Motor neuron (in vitro differentiated cells): ENCODE measurements at regions of chr18 and their contacts with region 1.

Region 1: DNA sequence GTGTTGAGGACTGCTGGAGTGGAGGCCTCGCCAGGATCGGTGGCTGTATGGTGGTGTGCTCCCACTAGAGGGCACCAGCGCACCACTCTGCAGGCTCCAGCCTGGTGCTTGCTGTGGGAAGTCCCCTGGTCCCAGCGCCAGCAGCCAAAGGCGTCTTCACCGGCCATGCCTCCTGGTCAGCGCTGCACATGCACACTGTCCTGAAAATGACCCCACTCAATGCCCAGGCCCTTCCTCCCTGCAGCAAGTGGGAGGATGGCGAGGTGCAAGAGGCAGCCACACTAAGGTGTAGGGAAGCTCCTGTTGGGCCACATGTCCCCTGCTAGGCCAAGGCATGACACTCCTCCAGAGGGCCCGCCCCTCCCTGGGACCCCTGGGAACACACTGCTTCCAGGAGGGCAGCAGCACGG is 136.5 kb downstream of the CTIF start:
- ATAC-seq: peak; percentile 92 to 98 (median 94)
- H3K4me3 ChIP-seq: no peak overlapping the region
- H3K27ac ChIP-seq: no peak overlapping the region
- H3K4me1 ChIP-seq: peaks cover 4 to 14% of the 10 kb centered on the region in 2 donors

Region 2: DNA sequence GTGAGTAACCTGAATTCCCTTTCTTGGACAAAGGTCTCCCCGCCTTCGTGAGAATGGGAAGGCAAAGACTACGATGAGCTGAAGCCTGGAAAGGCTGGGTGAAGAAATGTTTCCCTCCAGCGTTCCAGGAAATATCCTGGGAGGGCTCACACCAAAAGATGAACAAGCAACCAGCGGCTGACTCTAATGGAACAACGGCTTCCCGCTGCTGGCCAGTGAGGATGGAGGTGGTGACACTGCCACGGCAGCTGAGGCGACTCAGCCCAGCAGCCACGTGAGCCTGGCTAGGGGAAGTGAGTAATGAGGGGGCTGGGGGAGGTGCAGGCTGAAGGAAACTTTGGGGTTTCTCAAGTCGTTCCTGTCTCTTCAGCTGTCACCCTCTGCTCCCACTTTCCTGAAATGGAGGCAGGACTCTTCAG is 380.4 kb after region 1 on chr18:
- in situ Hi-C with region 1: loop called in 1 of 9 experiments (anchors 25 kb)
- ATAC-seq: peak in 3 of 8 experiments; percentile 28 to 82 (median 59)
- H3K4me3 ChIP-seq: no peak overlapping the region
- H3K27ac ChIP-seq: no peak overlapping the region
- H3K4me1 ChIP-seq: no peaks in the 10 kb centered on the region

Region 3: GRCh38 chr18:49238433-49239042 is 563.2 kb after region 1 on chr18:
- in situ Hi-C with region 1: loop called in 2 of 9 experiments (anchors 25 kb)
- ATAC-seq: peak in 3 of 8 experiments; percentile 15 to 36 (median 35)
- H3K4me3 ChIP-seq: no peak overlapping the region
- H3K27ac ChIP-seq: no peak overlapping the region
- H3K4me1 ChIP-seq: no peaks in the 10 kb centered on the region